PC-3 (cell line): ENCODE measurements at regions of chr1 and their contacts with region 1.

Region 1: GRCh38 chr1:42593486-42594100 is 64.6 kb upstream of the PPIH start:
- DNase-seq: no peak
- ATAC-seq: no peak
- H3K4me3 ChIP-seq: no peak overlapping the region
- H3K27ac ChIP-seq: no peak overlapping the region
- H3K4me1 ChIP-seq: no peaks in the 10 kb centered on the region
- H3K27me3 ChIP-seq: no peaks in the 10 kb centered on the region; the same call in 1 of the 2 replicates
- CTCF ChIP-seq: no peak

Region 2: DNA sequence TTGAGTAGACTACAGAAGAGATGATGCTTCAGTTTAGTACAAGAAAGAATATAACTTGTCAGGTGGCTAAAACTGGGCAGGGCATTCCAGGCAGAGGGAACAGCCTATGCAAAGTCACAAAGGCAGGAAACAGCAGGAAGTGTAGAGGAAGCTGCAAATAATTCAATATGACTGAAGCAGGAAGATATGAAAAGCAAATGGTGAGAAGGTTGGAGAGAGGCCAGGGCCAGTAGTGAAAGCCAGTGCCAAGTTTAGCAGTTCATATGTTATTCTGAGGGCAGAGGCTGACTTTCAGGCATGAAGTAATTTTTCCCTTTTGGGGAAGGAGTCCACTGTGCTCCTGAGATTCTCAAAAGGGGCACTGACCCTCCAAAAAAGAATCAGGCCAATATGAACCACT is 80.6 kb after region 1 on chr1:
- CTCF ChIA-PET with region 1: no interaction called
- POLR2A ChIA-PET with region 1: no interaction called
- intact Hi-C with region 1: no loop called
- DNase-seq: no peak
- ATAC-seq: no peak
- H3K4me3 ChIP-seq: no peak overlapping the region
- H3K27ac ChIP-seq: no peak overlapping the region
- H3K4me1 ChIP-seq: no peaks in the 10 kb centered on the region
- H3K27me3 ChIP-seq: no peaks in the 10 kb centered on the region
- CTCF ChIP-seq: no peak

Region 3: GRCh38 chr1:42721926-42722325 is 128.3 kb after region 1 on chr1:
- CTCF ChIA-PET with region 1: no interaction called
- POLR2A ChIA-PET with region 1: interaction called, 12 read pairs
- intact Hi-C with region 1: no loop called
- DNase-seq: no peak
- ATAC-seq: no peak
- H3K4me3 ChIP-seq: no peak overlapping the region
- H3K27ac ChIP-seq: no peak overlapping the region
- H3K4me1 ChIP-seq: no peaks in the 10 kb centered on the region
- H3K27me3 ChIP-seq: no peaks in the 10 kb centered on the region
- CTCF ChIP-seq: no peak